ENCODE measurements at regions of chr16 and their contacts with region 1.

Region 1: DNA sequence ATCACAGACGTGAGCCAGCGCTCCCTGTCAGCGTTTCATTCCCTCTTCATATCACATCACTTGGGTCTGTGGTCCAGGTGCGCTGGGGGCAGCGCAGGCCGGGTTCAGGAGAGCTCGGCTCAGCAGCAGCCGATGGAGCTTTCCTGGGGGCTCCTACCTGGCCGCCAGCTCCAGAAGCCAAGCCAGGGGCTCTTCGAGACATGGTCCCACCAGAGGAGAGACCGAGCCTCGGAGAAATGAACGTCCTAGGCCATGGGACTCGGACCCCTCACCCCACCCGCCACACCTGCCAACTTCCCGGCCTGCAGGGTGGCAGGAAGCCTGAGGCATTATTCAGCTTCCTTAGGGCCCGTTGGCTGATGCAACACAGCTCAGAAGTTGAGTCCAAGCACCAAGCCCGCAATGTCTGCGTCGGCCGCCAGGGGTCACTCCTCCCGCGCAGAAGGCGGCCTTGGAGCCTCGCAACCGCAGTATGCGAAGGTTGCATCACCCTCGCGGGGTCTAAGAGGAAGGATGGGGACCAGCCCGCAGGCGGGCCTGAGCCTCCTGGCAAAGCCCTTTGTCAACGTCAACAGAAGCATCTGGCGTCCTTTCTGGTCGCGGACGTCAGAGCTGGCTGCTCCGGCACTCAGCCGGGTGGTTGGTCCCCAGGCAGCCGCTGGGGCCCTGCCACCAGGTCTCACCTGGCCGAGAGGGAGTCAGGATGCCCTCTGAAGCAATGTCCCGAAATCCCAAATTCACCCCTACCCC is 13.2 kb upstream of the KLHDC4 start:
- DNase-seq: peak; percentile 84
- CTCF ChIP-seq: peak; percentile 98

Region 2: GRCh38 chr16:87671221-87671620 is 107.8 kb before region 1 on chr16:
- CTCF ChIA-PET with region 1: no interaction called
- POLR2A ChIA-PET with region 1: no interaction called
- DNase-seq: no peak
- CTCF ChIP-seq: no peak

Region 3: DNA sequence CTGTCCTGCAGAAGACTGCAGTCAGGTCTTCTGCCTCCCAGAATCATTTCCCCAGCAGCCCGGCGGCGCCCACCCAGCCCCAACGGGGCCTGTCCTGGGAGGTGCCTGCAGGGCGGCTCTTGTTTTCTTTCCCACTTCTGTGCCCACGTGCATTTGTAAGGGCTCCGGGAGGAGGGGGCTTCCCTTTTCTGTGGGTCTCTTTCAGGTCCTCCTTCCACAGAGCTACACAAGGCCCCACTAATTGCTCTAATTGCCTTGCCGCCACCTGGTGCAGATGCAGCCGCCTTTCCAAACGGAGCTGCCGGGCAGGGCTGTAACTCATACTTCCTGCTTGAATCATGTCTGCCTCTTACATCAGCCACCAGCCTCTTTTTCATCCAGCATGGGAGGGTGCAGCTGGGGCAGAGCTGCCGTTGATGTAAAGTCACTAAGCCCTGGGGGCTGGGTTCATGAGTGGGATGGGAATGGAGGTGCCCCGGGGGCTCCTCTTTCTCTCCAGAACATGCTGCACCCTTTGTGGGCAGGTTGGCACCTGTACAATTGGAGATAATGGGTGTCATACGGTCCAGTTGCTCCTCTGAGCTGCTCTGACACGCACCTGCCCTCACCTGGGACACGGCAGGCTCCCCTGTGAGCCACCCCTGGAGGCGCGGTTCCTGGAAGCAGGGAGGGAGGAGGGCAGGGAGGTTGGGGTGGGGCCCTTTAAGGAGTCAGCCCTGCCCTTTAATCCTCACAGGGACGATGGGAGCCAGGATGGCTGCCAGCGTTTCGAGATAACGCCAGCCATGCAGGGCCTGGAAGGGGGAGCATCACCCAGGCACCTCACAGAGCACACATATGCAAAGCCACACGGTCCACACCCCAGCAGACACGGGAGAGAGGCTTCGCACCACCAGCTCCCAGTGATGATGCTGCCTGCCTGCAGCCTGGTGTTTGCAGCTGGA is 27.9 kb after region 1 on chr16:
- CTCF ChIA-PET with region 1: interaction called, 132 read pairs
- POLR2A ChIA-PET with region 1: interaction called, 6 read pairs
- DNase-seq: no peak
- CTCF ChIP-seq: no peak

Region 4: DNA sequence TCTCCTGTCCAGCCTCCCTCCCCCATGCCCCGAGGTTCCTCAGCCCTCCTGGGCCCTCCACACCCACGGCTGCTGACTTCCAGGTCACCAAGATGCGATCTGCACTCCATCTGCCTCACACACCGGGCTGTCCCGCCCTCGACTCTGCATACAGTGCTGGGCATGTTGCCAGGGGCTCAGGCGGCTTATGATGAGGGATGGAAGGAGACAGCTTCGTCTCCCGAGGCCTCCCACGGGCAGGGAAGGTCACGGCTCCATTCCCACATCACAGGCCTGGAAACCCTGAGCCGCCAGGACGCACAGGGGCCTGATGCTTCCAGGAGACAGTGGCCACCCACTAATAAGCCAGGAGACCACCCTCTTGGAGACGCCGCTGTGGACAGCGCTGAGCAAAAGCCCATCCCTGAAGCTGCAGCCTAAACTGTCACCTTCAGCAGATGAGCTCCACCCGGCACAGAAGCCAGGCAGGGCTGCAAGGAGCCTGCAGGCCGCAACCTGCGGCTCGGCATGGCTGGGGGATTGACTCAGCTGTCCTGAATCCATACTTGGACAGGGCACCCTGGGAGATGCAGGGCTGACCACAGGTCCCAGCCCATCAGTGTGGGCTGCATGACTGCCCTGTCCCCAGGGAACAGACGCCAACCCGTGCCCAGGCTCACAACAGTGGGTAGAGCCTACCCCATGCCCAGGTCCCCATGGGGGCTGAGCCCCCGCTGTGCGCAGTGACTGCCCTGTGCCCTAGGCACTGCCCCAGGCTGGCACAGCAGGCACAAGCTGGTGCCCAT is 55.8 kb after region 1 on chr16:
- CTCF ChIA-PET with region 1: interaction called, 20 read pairs
- POLR2A ChIA-PET with region 1: no interaction called
- DNase-seq: no peak
- CTCF ChIP-seq: no peak

Region 5: GRCh38 chr16:87860553-87861299 is 81.7 kb after region 1 on chr16:
- CTCF ChIA-PET with region 1: interaction called, 236 read pairs
- POLR2A ChIA-PET with region 1: no interaction called
- DNase-seq: no peak
- CTCF ChIP-seq: no peak

Region 6: DNA sequence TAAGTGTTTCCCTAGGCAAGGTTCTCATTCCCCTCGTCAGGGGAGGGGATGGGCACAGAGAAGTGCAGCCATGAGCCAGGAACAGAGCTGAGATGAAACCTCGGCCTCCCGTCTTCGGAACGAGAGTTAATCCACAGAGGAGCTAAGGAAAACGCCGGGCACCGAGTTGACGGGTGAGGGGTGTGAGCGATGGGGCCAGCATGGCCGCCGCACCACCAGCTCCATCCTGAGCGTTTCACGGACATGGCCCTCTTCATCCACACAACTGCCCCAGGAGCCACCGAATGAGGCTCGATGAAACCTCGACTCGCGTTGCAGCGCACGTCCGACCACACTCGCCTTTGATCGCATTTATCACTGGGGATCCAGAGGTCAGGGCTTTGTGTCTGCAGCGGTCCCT is 135.8 kb after region 1 on chr16:
- CTCF ChIA-PET with region 1: interaction called, 64 read pairs
- POLR2A ChIA-PET with region 1: no interaction called
- DNase-seq: no peak
- CTCF ChIP-seq: no peak

Region 7: DNA sequence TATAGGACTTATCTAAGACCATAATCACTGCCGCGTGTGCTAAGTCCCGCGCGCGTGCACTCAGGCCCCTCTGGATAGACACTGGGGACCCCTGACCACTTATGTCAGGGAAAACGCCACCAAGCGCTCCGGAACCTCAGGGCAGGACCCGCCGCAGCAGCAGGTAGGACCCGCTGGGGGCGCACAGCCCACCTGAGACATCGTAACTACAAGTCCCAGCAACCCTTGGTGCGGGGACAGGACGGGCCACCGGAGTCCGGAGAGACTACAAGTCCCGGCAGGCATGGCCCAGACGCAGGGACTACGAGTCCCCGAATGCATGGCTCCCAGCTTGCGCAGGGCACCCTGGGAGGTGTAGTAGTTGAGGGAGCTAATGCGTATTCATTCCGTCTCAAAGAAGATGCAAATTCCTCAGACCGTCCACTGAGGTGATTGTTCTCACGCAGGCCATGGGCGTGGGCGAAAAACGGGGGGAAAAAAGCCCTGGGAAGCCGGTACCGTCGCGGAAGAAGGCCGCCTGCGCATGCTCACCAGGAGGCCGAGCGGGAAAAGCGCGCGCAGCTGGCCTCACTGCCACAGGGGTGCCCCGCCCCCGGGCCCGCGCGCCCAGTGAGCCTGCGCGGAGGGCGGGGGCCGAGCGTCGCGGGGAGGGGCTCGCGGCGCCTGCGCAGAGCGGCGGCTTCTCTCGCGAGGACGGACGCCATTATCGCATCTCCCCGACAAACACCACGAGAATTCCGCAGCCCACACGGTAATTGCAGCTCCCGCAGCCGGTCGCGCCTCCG is 172.0 kb after region 1 on chr16 and contains the start of gene BANP:
- CTCF ChIA-PET with region 1: interaction called, 21 read pairs
- POLR2A ChIA-PET with region 1: no interaction called
- DNase-seq: peak; percentile 98
- CTCF ChIP-seq: peak; percentile 29

Measured in GM10248 (cell line).